CD8-positive, alpha-beta T cell (primary cell): ENCODE measurements at regions of chr4 and their contacts with region 1.

Region 1: DNA sequence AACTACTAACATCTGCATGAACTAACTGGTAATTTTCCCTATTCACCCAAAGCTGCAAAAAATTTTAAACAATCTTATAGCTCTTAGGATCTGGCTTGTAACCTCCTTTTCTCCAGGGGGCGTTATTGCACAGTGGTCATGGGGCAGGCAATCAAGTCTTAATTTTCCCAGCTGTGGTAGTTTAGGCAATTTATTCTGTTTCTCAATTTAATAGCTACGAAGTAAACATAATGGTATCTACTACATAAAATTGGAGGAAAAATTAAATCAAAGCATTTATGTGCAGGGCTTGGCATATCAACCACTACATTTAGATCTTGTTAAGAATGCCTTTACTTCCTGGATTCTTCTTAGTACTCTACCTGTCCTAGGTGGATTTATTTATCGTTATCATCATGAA is 137.4 kb upstream of the GUCY1A1 start:
- DNase-seq: peak in 1 of 9 experiments; percentile 4
- ATAC-seq: no peak
- H3K4me3 ChIP-seq: no peak overlapping the region
- H3K4me3 Mint-ChIP-seq: no peak overlapping the region
- H3K27ac ChIP-seq: no peak overlapping the region
- H3K27ac Mint-ChIP-seq: no peak overlapping the region
- H3K4me1 ChIP-seq: no peaks in the 10 kb centered on the region
- H3K4me1 Mint-ChIP-seq: no peaks in the 10 kb centered on the region
- H3K27me3 ChIP-seq: no peaks in the 10 kb centered on the region
- H3K27me3 Mint-ChIP-seq: no peaks in the 10 kb centered on the region
- CTCF ChIP-seq: no peak

Region 2: GRCh38 chr4:155288999-155289398 is 240.3 kb before region 1 on chr4:
- CTCF ChIA-PET with region 1: no interaction called
- POLR2A ChIA-PET with region 1: no interaction called
- intact Hi-C with region 1: no loop called
- DNase-seq: no peak
- ATAC-seq: no peak
- H3K4me3 ChIP-seq: no peak overlapping the region
- H3K4me3 Mint-ChIP-seq: no peak overlapping the region
- H3K27ac ChIP-seq: no peak overlapping the region
- H3K27ac Mint-ChIP-seq: no peak overlapping the region
- H3K4me1 ChIP-seq: no peaks in the 10 kb centered on the region
- H3K4me1 Mint-ChIP-seq: no peaks in the 10 kb centered on the region
- H3K27me3 ChIP-seq: no peaks in the 10 kb centered on the region
- H3K27me3 Mint-ChIP-seq: peaks cover 8% of the 10 kb centered on the region
- CTCF ChIP-seq: no peak

Region 3: GRCh38 chr4:155777971-155778735 is 248.9 kb after region 1 on chr4:
- CTCF ChIA-PET with region 1: no interaction called
- POLR2A ChIA-PET with region 1: no interaction called
- intact Hi-C with region 1: loop called in 1 of 2 experiments (anchors 10 kb)
- DNase-seq: no peak
- ATAC-seq: no peak
- H3K4me3 ChIP-seq: no peak overlapping the region
- H3K4me3 Mint-ChIP-seq: no peak overlapping the region
- H3K27ac ChIP-seq: no peak overlapping the region
- H3K27ac Mint-ChIP-seq: no peak overlapping the region
- H3K4me1 ChIP-seq: no peaks in the 10 kb centered on the region
- H3K4me1 Mint-ChIP-seq: no peaks in the 10 kb centered on the region
- H3K27me3 ChIP-seq: no peaks in the 10 kb centered on the region
- H3K27me3 Mint-ChIP-seq: no peaks in the 10 kb centered on the region
- CTCF ChIP-seq: no peak

Region 4: GRCh38 chr4:155906554-155907247 is 377.4 kb after region 1 on chr4:
- CTCF ChIA-PET with region 1: no interaction called
- POLR2A ChIA-PET with region 1: no interaction called
- intact Hi-C with region 1: no loop called
- DNase-seq: no peak
- ATAC-seq: no peak
- H3K4me3 ChIP-seq: no peak overlapping the region
- H3K4me3 Mint-ChIP-seq: no peak overlapping the region
- H3K27ac ChIP-seq: no peak overlapping the region
- H3K27ac Mint-ChIP-seq: no peak overlapping the region
- H3K4me1 ChIP-seq: no peaks in the 10 kb centered on the region
- H3K4me1 Mint-ChIP-seq: no peaks in the 10 kb centered on the region
- H3K27me3 ChIP-seq: no peaks in the 10 kb centered on the region
- H3K27me3 Mint-ChIP-seq: peaks cover 7% of the 10 kb centered on the region
- CTCF ChIP-seq: no peak